ENCODE measurements at regions of chr20 and their contacts with region 1.

Region 1: GRCh38 chr20:20083807-20084206 is 31.5 kb downstream of the CFAP61 start:
- DNase-seq: no peak
- H3K4me3 Mint-ChIP-seq: no peak overlapping the region
- H3K27ac Mint-ChIP-seq: no peak overlapping the region
- H3K4me1 Mint-ChIP-seq: peaks cover 2% of the 10 kb centered on the region
- H3K27me3 Mint-ChIP-seq: peaks cover 9% of the 10 kb centered on the region

Region 2: DNA sequence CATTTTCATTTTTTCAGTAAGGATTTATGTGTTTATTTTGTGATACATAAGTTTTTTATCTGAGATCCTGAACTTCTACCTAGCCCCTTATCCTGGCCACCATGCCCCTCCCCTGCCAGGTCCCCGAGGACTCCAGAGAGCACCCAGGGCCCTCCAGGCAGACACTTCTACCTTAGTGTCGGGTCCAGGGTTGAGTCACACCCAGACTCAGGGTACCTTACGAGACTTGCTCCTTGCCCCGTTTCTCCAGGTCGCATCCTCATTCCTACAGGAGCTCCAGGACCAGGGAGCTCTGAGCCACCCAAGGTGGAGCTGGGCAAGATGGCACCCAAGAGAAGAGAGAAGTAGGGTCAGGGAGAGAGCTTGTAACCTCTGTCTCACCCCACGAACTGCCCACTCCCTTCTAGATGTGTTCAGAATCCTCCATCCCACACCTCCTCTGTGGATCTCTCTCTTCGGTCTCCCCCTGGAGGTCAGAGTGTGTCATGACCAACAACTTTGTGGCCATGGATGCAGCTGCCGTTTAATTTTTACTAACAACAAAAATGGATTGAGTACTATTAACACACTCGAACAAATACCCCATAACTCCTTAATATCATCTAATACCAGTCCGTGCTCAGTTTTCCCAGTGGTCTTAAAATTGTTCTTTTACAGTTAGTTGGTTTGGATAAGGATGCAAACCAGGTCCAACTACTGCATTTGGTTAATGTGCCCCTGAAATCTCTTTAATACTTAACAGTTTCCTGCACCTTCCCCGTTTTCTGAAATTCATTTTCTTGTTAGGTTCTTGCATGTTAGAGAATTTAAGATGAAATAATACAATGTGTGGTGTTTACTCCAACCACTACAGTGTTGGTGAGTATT is 153.5 kb after region 1 on chr20:
- intact Hi-C with region 1: loop called (anchors 5 kb)
- DNase-seq: no peak
- H3K4me3 Mint-ChIP-seq: no peak overlapping the region
- H3K27ac Mint-ChIP-seq: no peak overlapping the region
- H3K4me1 Mint-ChIP-seq: no peaks in the 10 kb centered on the region
- H3K27me3 Mint-ChIP-seq: peaks cover 4% of the 10 kb centered on the region

Region 3: GRCh38 chr20:20568604-20569205 is 484.9 kb after region 1 on chr20:
- intact Hi-C with region 1: loop called (anchors 2 kb)
- DNase-seq: no peak
- H3K4me3 Mint-ChIP-seq: no peak overlapping the region
- H3K27ac Mint-ChIP-seq: no peak overlapping the region
- H3K4me1 Mint-ChIP-seq: peaks cover 7% of the 10 kb centered on the region
- H3K27me3 Mint-ChIP-seq: no peaks in the 10 kb centered on the region

Region 4: DNA sequence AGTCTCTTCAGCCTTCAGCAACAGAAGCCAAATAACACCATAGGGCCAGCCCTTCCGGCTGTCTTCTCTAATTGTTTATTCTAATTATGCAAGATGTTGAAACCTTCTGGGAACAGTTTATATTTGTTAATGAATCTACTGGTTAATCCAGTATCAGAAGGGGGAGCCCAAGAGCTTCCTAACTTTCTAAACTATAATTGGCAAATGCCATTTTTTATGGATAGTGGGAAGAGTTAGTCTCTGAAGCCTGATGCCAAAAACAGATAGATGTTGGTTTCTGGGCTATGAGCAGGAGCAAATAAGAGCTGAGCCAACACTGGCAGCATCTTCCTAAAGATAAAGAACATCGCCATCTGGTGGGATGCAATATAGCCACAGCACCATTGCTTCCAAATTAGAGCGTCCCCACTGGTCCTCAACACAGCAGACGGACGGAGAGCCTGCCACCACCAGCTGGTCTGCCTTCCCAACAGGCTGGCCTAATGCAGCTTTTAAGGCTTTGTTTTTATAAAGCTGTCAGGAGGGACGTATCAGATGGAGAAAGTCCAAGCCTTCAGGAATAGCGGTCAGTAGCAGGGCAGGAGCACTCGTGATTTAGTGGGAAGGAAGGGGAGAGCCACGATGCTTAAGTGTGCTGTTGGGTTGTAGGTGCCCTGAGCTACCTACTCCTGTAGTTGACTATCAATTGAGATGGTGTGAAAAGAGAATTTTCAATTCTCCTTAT is 509.8 kb after region 1 on chr20:
- intact Hi-C with region 1: loop called (anchors 1 kb)
- DNase-seq: no peak
- H3K4me3 Mint-ChIP-seq: no peak overlapping the region
- H3K27ac Mint-ChIP-seq: no peak overlapping the region
- H3K4me1 Mint-ChIP-seq: peaks cover 2% of the 10 kb centered on the region
- H3K27me3 Mint-ChIP-seq: no peaks in the 10 kb centered on the region

Region 5: GRCh38 chr20:20824924-20825584 is 741.2 kb after region 1 on chr20:
- intact Hi-C with region 1: loop called (anchors 5 kb)
- DNase-seq: peak; percentile 26
- H3K4me3 Mint-ChIP-seq: no peak overlapping the region
- H3K27ac Mint-ChIP-seq: no peak overlapping the region
- H3K4me1 Mint-ChIP-seq: no peaks in the 10 kb centered on the region
- H3K27me3 Mint-ChIP-seq: peaks cover 10% of the 10 kb centered on the region

Measured in activated T-helper 2 cell treated with anti-CD3 and anti-CD28 coated beads, Interferon-gamma antibody, Interleukin-2, Interleukin-4, amounts not matched to agents 10 μg/mL and 5 μg/mL and 100 μg/mL, durations not matched to agents 14 hours and 24 hours and 36 hours (primary cell).